Common myeloid progenitor, CD34-positive (primary cell): ENCODE measurements at regions of chr11 and their contacts with region 1.

Region 1: DNA sequence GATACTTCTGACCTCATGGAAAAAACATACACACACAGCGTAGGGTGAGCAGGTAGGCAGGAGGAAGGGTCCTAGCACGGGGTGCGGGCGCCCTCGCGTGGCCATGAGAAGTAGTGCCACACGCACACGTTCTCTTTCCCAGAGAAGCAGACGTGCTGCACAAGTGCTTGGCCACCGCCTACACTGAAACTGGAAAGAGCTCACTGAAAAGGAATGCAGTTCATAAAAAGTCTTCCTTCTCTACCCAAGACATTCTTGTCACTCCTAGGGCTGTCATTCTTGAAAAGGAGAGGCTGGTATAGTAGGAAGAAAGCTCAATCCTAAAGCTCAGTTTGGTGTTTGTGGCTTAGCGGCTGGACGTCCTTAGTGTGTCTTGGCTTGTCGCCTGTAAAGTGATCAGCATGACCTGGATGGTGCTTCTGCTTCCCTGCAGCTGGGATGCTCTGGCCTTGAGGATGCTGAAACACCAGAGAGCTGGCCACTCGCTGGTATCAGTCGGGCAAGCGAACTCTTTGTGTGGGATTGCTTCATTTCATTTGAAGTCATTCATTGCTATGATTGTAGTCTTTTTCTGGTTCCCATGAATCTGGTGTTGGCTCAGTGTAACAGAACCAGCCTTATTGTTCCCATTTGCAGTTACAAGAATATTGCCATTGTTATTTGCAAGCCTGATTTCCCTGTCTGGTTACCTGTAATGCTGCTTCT is 303.8 kb downstream of the NTM start:
- DNase-seq: peak; percentile 50 to 70 (median 63)
- H3K4me3 ChIP-seq: no peak overlapping the region
- H3K27ac ChIP-seq: no peak overlapping the region
- H3K4me1 ChIP-seq: no peaks in the 10 kb centered on the region
- H3K27me3 ChIP-seq: peaks cover 0 to 11% (median 2%) of the 10 kb centered on the region in 5 experiments

Region 2: DNA sequence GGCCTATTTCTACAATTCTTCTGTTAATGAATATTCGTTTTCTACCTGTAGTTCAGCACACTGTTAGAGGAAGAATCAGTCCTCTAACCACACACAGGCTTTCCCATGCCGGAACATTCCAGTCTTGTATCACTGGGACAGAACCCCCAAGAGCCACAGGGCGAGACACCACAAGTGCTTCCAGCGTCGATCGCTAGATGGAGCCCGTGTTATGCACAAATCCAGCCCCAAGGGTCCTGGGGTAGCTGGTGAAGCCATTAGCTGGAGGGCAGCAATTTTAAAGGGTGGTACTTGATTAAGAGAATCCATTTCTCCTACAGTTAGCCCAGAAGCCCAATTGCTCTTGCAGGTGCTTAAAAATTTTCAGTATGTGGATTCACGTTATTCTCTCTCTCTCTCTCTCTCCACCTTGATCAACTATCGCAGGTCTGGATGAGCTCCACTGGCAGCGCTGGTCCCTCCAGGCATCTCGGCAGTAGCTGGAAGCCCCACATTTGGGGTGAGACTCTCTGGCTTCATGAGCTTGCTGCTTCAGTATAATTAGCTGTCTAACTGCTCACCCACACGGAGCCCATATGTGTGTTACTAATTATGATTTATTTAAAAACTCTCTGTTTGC is 609.7 kb before region 1 on chr11:
- CTCF ChIA-PET with region 1: interaction called, 18 read pairs
- POLR2A ChIA-PET with region 1: no interaction called
- DNase-seq: peak; percentile 44 to 68 (median 55)
- H3K4me3 ChIP-seq: no peak overlapping the region
- H3K27ac ChIP-seq: no peak overlapping the region
- H3K4me1 ChIP-seq: no peaks in the 10 kb centered on the region
- H3K27me3 ChIP-seq: peaks cover 0 to 12% (median 5%) of the 10 kb centered on the region in 5 experiments

Region 3: DNA sequence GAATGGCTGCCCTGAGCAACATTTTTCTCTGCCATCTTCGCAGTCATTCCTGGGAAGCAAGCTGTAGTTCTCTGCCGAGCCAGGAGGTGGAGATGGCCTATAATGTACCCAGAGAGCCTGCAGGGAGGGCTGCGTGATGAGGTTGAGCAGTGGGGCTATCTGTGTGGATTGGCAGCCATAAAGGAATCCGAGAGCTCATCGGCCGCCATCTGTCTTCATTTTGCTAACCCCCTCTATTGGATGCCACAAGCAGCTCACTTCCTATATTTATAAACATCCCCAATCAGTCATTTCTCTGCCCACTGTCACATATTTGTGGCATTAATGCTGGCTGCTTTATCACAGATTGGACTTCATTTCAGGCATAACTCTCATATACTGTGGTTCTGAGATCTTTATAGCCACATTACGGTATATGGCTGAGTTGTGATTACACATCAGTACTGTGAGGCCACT is 94.2 kb before region 1 on chr11:
- CTCF ChIA-PET with region 1: interaction called, 136 read pairs
- POLR2A ChIA-PET with region 1: no interaction called
- DNase-seq: peak; percentile 52 to 71 (median 56)
- H3K4me3 ChIP-seq: no peak overlapping the region
- H3K27ac ChIP-seq: no peak overlapping the region
- H3K4me1 ChIP-seq: no peaks in the 10 kb centered on the region
- H3K27me3 ChIP-seq: peaks cover 9 to 35% (median 12%) of the 10 kb centered on the region in 5 experiments

Region 4: GRCh38 chr11:131688051-131688698 is 14.0 kb after region 1 on chr11:
- CTCF ChIA-PET with region 1: interaction called, 15 read pairs
- POLR2A ChIA-PET with region 1: no interaction called
- DNase-seq: peak; percentile 64 to 81 (median 77)
- H3K4me3 ChIP-seq: peak overlapping the region in 1 of 7 experiments; percentile 20
- H3K27ac ChIP-seq: no peak overlapping the region
- H3K4me1 ChIP-seq: peaks cover 0 to 6% (median 2%) of the 10 kb centered on the region in 4 experiments
- H3K27me3 ChIP-seq: peaks cover 0 to 44% (median 15%) of the 10 kb centered on the region in 5 experiments

Region 5: GRCh38 chr11:131694526-131695424 is 20.6 kb after region 1 on chr11:
- CTCF ChIA-PET with region 1: interaction called, 15 read pairs
- POLR2A ChIA-PET with region 1: no interaction called
- DNase-seq: peak; percentile 60 to 77 (median 73)
- H3K4me3 ChIP-seq: peak overlapping the region in 1 of 7 experiments; percentile 46
- H3K27ac ChIP-seq: no peak overlapping the region
- H3K4me1 ChIP-seq: peaks cover 0 to 3% (median 0%) of the 10 kb centered on the region in 4 experiments
- H3K27me3 ChIP-seq: peaks cover 6 to 62% (median 10%) of the 10 kb centered on the region in 5 experiments